ENCODE measurements at regions of chr6 and their contacts with region 1.

Region 1: DNA sequence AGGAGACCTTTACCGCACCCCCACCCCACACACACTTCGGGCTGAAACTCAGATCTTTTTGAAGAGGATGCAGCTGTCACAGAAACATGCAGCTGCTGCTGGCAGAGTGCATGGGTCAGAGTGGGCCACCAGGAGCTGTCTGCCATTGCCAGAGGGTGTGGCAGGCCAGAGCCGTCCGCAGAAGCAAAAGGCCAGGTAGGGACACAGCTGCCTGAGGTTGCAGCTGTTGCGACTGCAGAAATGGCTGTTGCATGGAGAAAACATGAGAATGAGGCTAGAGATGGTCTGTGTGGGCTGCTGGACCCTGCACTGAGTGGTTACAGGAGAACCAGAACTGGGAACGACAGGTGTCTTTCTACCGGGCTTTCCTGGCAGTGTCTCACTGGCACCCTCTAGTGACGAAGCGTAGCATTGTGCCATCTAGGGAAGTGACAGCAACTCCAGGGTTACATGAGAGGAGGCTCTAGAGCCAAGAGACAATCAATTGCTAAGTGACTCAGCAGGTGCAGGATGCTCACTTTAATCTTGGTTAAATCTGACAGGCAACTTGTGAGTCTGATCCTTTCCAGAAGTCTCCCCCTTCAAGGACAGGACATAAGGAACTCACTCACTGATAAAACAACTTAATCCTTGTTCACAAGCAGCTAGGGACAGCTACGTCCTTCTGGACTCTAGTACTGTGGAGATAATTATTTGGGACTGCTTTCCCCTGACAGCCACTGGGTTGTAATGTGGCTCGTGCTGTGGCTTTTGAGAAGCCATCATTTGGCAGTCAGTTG is 29.1 kb upstream of the SERPINB9 start:
- DNase-seq: peak; percentile 74 to 88 (median 86)
- H3K4me3 ChIP-seq: peak overlapping the region in 1 of 3 experiments; percentile 50
- H3K4me3 Mint-ChIP-seq: peak overlapping the region; percentile 53 to 76
- H3K27ac ChIP-seq: no peak overlapping the region
- H3K27ac Mint-ChIP-seq: peak overlapping the region in 4 of 7 donors; percentile 45 to 62 (median 53)
- H3K4me1 ChIP-seq: peaks cover 9 to 10% of the 10 kb centered on the region in 2 donors
- H3K4me1 Mint-ChIP-seq: peaks cover 11% of the 10 kb centered on the region
- H3K27me3 ChIP-seq: no peaks in the 10 kb centered on the region
- H3K27me3 Mint-ChIP-seq: peaks cover 0 to 5% (median 1%) of the 10 kb centered on the region in 3 donors
- CTCF ChIP-seq: peak; percentile 94

Region 2: GRCh38 chr6:2791124-2791974 is 140.8 kb before region 1 on chr6:
- intact Hi-C with region 1: loop called (anchors 2 to 5 kb)
- DNase-seq: peak; percentile 72 to 81 (median 79)
- H3K4me3 ChIP-seq: no peak overlapping the region
- H3K4me3 Mint-ChIP-seq: no peak overlapping the region
- H3K27ac ChIP-seq: peak overlapping the region; percentile 55 to 94
- H3K27ac Mint-ChIP-seq: peak overlapping the region; percentile 88 to 100 (median 99)
- H3K4me1 ChIP-seq: peaks cover 51 to 57% of the 10 kb centered on the region in 2 donors
- H3K4me1 Mint-ChIP-seq: peaks cover 51% of the 10 kb centered on the region
- H3K27me3 ChIP-seq: no peaks in the 10 kb centered on the region
- H3K27me3 Mint-ChIP-seq: peaks cover 0 to 4% (median 1%) of the 10 kb centered on the region in 3 donors
- CTCF ChIP-seq: peak; percentile 74

Region 3: DNA sequence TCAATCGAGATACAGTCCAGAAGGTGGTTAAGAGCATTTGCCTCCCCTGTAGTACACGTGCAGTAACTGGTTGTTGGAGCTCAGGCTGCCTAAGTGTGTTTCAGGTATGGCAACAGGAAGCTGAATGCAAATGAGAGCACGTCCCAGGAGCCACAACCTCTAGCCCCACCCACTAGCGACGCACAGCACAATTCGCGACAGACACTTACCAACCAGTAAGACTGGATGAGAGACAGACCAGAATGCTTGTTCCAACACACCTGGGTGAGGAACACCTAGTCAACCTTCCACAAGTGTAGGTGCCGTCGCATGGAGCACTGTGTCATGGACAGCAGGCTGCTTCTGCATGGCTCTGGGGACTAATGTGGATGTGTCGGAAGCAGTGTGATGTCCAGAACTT is 83.3 kb before region 1 on chr6:
- intact Hi-C with region 1: loop called (anchors 5 kb)
- DNase-seq: no peak
- H3K4me3 ChIP-seq: no peak overlapping the region
- H3K4me3 Mint-ChIP-seq: no peak overlapping the region
- H3K27ac ChIP-seq: no peak overlapping the region
- H3K27ac Mint-ChIP-seq: peak overlapping the region in 4 of 7 donors; percentile 3 to 57 (median 40)
- H3K4me1 ChIP-seq: peaks cover 28 to 34% of the 10 kb centered on the region in 2 donors
- H3K4me1 Mint-ChIP-seq: peaks cover 45% of the 10 kb centered on the region
- H3K27me3 ChIP-seq: no peaks in the 10 kb centered on the region
- H3K27me3 Mint-ChIP-seq: peaks cover 0 to 2% (median 0%) of the 10 kb centered on the region in 3 donors
- CTCF ChIP-seq: no peak

Region 4: DNA sequence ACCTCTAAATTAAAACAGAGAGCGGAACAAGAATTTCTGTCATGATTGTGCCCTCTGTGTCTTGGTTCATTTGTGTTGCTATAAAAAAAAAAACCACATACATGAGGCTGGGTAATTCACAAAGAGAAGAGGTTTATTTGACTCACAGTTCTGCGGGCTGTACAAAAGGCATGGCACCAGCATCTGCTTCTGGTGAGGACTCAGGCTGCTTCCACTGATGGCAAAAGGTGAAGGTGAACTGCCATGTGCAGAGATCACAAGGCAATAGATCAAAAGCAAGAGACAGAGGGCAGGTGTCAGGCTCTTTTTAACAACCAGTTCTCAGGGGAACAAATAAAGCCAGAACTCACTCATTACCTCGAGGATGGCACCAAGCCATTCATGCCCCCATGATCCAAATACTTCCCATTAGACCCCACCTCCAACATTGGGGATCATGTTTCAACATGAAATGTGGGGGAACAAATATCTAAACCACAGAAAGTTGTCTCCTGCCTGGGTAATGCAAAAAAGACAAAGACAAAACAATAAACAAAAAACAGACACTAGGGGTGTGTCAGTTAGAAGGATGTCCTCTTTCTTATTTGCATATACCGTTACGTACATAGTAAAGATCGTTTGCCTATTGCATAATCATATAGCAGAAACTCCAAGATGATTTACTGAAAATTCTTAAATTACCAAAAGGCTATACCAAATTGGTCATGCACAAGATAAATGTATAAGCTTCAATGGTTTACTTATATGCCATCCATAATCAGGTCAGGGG is 46.0 kb before region 1 on chr6:
- intact Hi-C with region 1: loop called in 1 of 2 experiments (anchors 5 kb)
- DNase-seq: peak; percentile 45 to 83 (median 75)
- H3K4me3 ChIP-seq: no peak overlapping the region
- H3K4me3 Mint-ChIP-seq: no peak overlapping the region
- H3K27ac ChIP-seq: peak overlapping the region in 1 of 2 donors; percentile 55
- H3K27ac Mint-ChIP-seq: peak overlapping the region; percentile 75 to 88 (median 82)
- H3K4me1 ChIP-seq: peaks cover 10 to 40% of the 10 kb centered on the region in 2 donors
- H3K4me1 Mint-ChIP-seq: peaks cover 41% of the 10 kb centered on the region
- H3K27me3 ChIP-seq: no peaks in the 10 kb centered on the region
- H3K27me3 Mint-ChIP-seq: no peaks in the 10 kb centered on the region
- CTCF ChIP-seq: no peak